CD8-positive, alpha-beta T cell (primary cell): ENCODE measurements at regions of chr6 and their contacts with region 1.

Region 1: GRCh38 chr6:159125014-159125609 is 44.1 kb upstream of the FNDC1 start:
- DNase-seq: no peak
- ATAC-seq: no peak
- H3K4me3 ChIP-seq: no peak overlapping the region
- H3K4me3 Mint-ChIP-seq: no peak overlapping the region
- H3K27ac ChIP-seq: no peak overlapping the region
- H3K27ac Mint-ChIP-seq: no peak overlapping the region
- H3K4me1 ChIP-seq: no peaks in the 10 kb centered on the region
- H3K4me1 Mint-ChIP-seq: no peaks in the 10 kb centered on the region
- H3K27me3 ChIP-seq: no peaks in the 10 kb centered on the region
- H3K27me3 Mint-ChIP-seq: no peaks in the 10 kb centered on the region
- CTCF ChIP-seq: peak; percentile 49

Region 2: GRCh38 chr6:159110013-159110412 is 15.1 kb before region 1 on chr6:
- CTCF ChIA-PET with region 1: interaction called, 15 read pairs
- POLR2A ChIA-PET with region 1: interaction called, 3 read pairs
- intact Hi-C with region 1: no loop called
- DNase-seq: peak in 4 of 9 experiments; percentile 26 to 76 (median 54)
- ATAC-seq: no peak
- H3K4me3 ChIP-seq: no peak overlapping the region
- H3K4me3 Mint-ChIP-seq: no peak overlapping the region
- H3K27ac ChIP-seq: no peak overlapping the region
- H3K27ac Mint-ChIP-seq: no peak overlapping the region
- H3K4me1 ChIP-seq: peaks cover 50% of the 10 kb centered on the region
- H3K4me1 Mint-ChIP-seq: peaks cover 60% of the 10 kb centered on the region
- H3K27me3 ChIP-seq: no peaks in the 10 kb centered on the region
- H3K27me3 Mint-ChIP-seq: no peaks in the 10 kb centered on the region
- CTCF ChIP-seq: peak; percentile 86